ENCODE measurements at regions of chr2 and their contacts with region 1.

Region 1: GRCh38 chr2:84925724-84926376 is 20.4 kb downstream of the TMSB10 start:
- DNase-seq: peak; percentile 96 to 100 (median 98)
- ATAC-seq: peak; percentile 80
- H3K4me3 ChIP-seq: peak overlapping the region; percentile 74 to 80
- H3K4me3 Mint-ChIP-seq: peak overlapping the region; percentile 94
- H3K27ac ChIP-seq: peak overlapping the region; percentile 49 to 54
- H3K27ac Mint-ChIP-seq: peak overlapping the region; percentile 92
- H3K4me1 ChIP-seq: peaks cover 26% of the 10 kb centered on the region
- H3K4me1 Mint-ChIP-seq: peaks cover 41% of the 10 kb centered on the region
- H3K27me3 ChIP-seq: no peaks in the 10 kb centered on the region
- H3K27me3 Mint-ChIP-seq: no peaks in the 10 kb centered on the region
- CTCF ChIP-seq: peak; percentile 99

Region 2: DNA sequence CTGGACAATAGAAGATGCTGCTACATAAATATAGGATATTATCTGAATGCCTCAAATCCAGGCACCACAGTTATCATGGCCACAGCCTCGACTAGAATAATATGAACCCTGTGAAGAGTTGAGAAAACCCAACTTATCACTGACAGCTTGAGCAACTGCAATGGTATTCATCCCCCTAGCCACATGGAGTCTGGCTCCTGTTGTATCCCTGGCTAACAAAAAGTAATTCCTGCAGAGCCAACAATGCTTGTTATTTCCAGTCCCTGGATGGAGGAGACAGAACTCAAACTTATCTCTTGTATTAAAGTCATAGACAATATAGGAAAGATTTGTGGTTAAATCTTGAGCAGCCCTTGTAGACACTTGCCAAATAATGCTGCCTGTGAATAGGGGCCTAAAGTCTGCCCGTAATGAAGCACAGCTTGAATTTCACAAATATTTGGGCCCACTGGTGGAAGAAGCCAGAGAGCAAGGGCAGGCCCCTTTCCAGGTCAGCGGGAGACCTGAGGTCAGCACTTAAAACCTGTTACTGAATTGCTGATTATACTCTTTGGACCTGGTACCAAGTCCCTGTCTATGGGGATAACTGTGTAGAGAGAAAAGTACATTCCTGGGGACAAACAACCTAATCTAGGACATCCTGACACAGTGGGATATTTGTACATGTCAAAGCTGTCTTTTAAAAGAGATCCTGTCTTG is 438.4 kb before region 1 on chr2:
- CTCF ChIA-PET with region 1: interaction called, 36 read pairs
- POLR2A ChIA-PET with region 1: no interaction called
- intact Hi-C with region 1: no loop called
- DNase-seq: no peak
- ATAC-seq: no peak
- H3K4me3 ChIP-seq: no peak overlapping the region
- H3K4me3 Mint-ChIP-seq: no peak overlapping the region
- H3K27ac ChIP-seq: no peak overlapping the region
- H3K27ac Mint-ChIP-seq: no peak overlapping the region
- H3K4me1 ChIP-seq: peaks cover 2% of the 10 kb centered on the region
- H3K4me1 Mint-ChIP-seq: peaks cover 2% of the 10 kb centered on the region
- H3K27me3 ChIP-seq: no peaks in the 10 kb centered on the region
- H3K27me3 Mint-ChIP-seq: no peaks in the 10 kb centered on the region
- CTCF ChIP-seq: no peak

Region 3: GRCh38 chr2:84631047-84631446 is 294.8 kb before region 1 on chr2:
- CTCF ChIA-PET with region 1: interaction called, 15 read pairs
- POLR2A ChIA-PET with region 1: no interaction called
- intact Hi-C with region 1: loop called (anchors 2 to 5 kb)
- DNase-seq: peak in 2 of 9 experiments; percentile 40 to 57
- ATAC-seq: peak; percentile 51
- H3K4me3 ChIP-seq: no peak overlapping the region
- H3K4me3 Mint-ChIP-seq: no peak overlapping the region
- H3K27ac ChIP-seq: no peak overlapping the region
- H3K27ac Mint-ChIP-seq: no peak overlapping the region
- H3K4me1 ChIP-seq: peaks cover 22% of the 10 kb centered on the region
- H3K4me1 Mint-ChIP-seq: peaks cover 41% of the 10 kb centered on the region
- H3K27me3 ChIP-seq: no peaks in the 10 kb centered on the region
- H3K27me3 Mint-ChIP-seq: no peaks in the 10 kb centered on the region
- CTCF ChIP-seq: peak; percentile 51

Region 4: GRCh38 chr2:84840306-84840705 is 85.5 kb before region 1 on chr2:
- CTCF ChIA-PET with region 1: interaction called, 11 read pairs
- POLR2A ChIA-PET with region 1: no interaction called
- intact Hi-C with region 1: no loop called
- DNase-seq: no peak
- ATAC-seq: peak; percentile 19
- H3K4me3 ChIP-seq: peak overlapping the region in 1 of 2 experiments; percentile 31
- H3K4me3 Mint-ChIP-seq: peak overlapping the region; percentile 71
- H3K27ac ChIP-seq: peak overlapping the region; percentile 64 to 72
- H3K27ac Mint-ChIP-seq: peak overlapping the region; percentile 93
- H3K4me1 ChIP-seq: peaks cover 90% of the 10 kb centered on the region
- H3K4me1 Mint-ChIP-seq: peaks cover 88% of the 10 kb centered on the region
- H3K27me3 ChIP-seq: no peaks in the 10 kb centered on the region
- H3K27me3 Mint-ChIP-seq: no peaks in the 10 kb centered on the region
- CTCF ChIP-seq: no peak

Region 5: GRCh38 chr2:84870306-84870705 is 55.5 kb before region 1 on chr2:
- CTCF ChIA-PET with region 1: interaction called, 278 read pairs
- POLR2A ChIA-PET with region 1: interaction called, 13 read pairs
- intact Hi-C with region 1: loop called in 1 of 2 experiments (anchors 1 kb)
- DNase-seq: peak in 2 of 9 experiments; percentile 39 to 48
- ATAC-seq: no peak
- H3K4me3 ChIP-seq: no peak overlapping the region
- H3K4me3 Mint-ChIP-seq: peak overlapping the region; percentile 32
- H3K27ac ChIP-seq: no peak overlapping the region
- H3K27ac Mint-ChIP-seq: peak overlapping the region; percentile 82
- H3K4me1 ChIP-seq: peaks cover 82% of the 10 kb centered on the region
- H3K4me1 Mint-ChIP-seq: peaks cover 82% of the 10 kb centered on the region
- H3K27me3 ChIP-seq: no peaks in the 10 kb centered on the region
- H3K27me3 Mint-ChIP-seq: no peaks in the 10 kb centered on the region
- CTCF ChIP-seq: no peak

Region 6: DNA sequence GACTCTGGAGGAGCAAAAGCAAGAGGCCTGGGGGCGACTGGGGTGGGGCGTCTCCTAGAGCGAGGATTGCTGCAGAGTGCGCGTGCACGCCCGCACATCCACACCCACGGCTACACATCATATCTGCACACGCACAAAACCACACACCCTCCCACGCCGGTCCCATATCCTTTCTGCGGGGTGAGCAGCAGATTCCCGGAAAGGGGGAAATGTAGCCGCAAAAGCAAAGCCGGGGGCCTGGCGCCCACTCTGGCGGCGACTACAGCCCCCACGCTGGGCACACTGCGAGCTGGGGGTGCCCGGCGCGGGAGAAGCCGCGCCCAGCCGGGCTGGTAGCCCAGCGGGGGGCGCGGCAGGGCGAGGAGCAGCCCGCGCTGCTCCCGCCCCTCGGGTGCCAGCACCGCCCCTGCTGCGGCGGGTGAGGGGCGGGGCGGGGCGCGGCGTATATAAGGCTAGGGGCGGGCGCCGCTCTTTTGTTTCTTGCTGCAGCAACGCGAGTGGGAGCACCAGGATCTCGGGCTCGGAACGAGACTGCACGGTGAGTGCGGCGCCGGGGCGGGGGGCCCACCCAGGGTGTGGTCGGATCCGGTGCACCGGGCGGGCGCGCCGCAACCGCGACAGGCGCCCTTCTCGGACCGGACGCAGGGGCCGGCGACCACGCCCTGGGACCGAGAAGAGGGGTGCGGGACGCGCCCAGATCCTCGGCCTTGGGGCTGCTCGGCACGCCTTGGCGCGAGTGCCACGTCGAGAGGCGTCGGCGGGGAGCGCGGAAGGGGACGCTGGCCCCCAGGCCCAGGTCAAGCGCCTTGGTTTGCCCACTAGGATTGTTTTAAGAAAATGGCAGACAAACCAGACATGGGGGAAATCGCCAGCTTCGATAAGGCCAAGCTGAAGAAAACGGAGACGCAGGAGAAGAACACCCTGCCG is 20.4 kb before region 1 on chr2 and contains the start of gene TMSB10:
- CTCF ChIA-PET with region 1: interaction called, 98 read pairs
- POLR2A ChIA-PET with region 1: interaction called, 153 read pairs
- intact Hi-C with region 1: loop called (anchors 1 kb)
- DNase-seq: peak; percentile 84 to 97 (median 91)
- ATAC-seq: peak; percentile 80
- H3K4me3 ChIP-seq: peak within 1 kb of the TSS; percentile 85 to 91
- H3K4me3 Mint-ChIP-seq: peak within 1 kb of the TSS; percentile 92
- H3K27ac ChIP-seq: peak within 1 kb of the TSS; percentile 68 to 80
- H3K27ac Mint-ChIP-seq: peak within 1 kb of the TSS; percentile 90
- H3K4me1 ChIP-seq: peaks cover 39% of the 10 kb centered on the region
- H3K4me1 Mint-ChIP-seq: peaks cover 59% of the 10 kb centered on the region
- H3K27me3 ChIP-seq: no peaks in the 10 kb centered on the region
- H3K27me3 Mint-ChIP-seq: no peaks in the 10 kb centered on the region
- CTCF ChIP-seq: no peak
- total RNA-seq, gene TMSB10: 1,479 to 1,577 TPM

Region 7: DNA sequence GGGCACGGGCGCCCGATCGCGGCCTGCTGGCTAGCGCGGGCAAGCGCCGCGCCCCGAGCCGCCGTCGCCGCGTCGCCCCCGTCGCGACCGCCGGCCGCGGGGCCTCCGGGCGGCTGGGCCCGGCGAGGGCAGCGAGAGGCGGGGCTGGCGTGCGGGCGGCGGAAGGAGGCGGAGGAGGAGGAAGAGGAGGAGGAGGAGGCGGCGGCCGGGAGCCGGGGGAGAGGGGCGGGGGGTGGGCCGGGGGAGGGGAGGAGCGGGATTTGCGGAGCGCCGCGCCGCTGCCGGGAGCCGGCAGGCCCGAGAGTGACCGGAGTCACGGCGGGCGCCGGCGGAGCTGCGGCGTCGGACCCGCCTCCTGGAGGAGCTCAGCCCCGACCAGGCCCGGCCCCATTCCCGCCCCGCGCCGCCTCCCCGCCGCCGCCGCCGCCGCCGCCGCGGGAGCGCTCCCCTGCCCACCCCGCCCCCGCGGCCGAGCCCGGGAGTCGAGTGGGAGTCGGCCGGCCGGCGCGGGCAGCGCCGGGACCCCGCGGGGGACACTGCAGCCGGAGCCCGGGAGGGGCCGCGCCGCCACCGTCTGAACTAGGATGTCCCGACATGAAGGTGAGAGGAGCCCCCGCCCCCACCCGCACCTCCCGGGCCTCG is 45.1 kb after region 1 on chr2 and contains the start of gene KCMF1:
- CTCF ChIA-PET with region 1: interaction called, 15 read pairs
- POLR2A ChIA-PET with region 1: no interaction called
- intact Hi-C with region 1: loop called (anchors 1 to 5 kb)
- DNase-seq: peak; percentile 26 to 80 (median 69)
- ATAC-seq: peak; percentile 52
- H3K4me3 ChIP-seq: peak within 1 kb of the TSS; percentile 66 to 75
- H3K4me3 Mint-ChIP-seq: peak within 1 kb of the TSS; percentile 92
- H3K27ac ChIP-seq: peak within 1 kb of the TSS; percentile 74 to 78
- H3K27ac Mint-ChIP-seq: peak within 1 kb of the TSS; percentile 97
- H3K4me1 ChIP-seq: peaks cover 51% of the 10 kb centered on the region
- H3K4me1 Mint-ChIP-seq: peaks cover 61% of the 10 kb centered on the region
- H3K27me3 ChIP-seq: no peaks in the 10 kb centered on the region
- H3K27me3 Mint-ChIP-seq: no peaks in the 10 kb centered on the region
- CTCF ChIP-seq: no peak
- total RNA-seq, gene KCMF1: 85.3 to 89.5 TPM

Region 8: GRCh38 chr2:85089585-85089984 is 163.7 kb after region 1 on chr2:
- CTCF ChIA-PET with region 1: no interaction called
- POLR2A ChIA-PET with region 1: no interaction called
- intact Hi-C with region 1: no loop called
- DNase-seq: no peak
- ATAC-seq: no peak
- H3K4me3 ChIP-seq: no peak overlapping the region
- H3K4me3 Mint-ChIP-seq: no peak overlapping the region
- H3K27ac ChIP-seq: no peak overlapping the region
- H3K27ac Mint-ChIP-seq: no peak overlapping the region
- H3K4me1 ChIP-seq: no peaks in the 10 kb centered on the region
- H3K4me1 Mint-ChIP-seq: no peaks in the 10 kb centered on the region
- H3K27me3 ChIP-seq: no peaks in the 10 kb centered on the region
- H3K27me3 Mint-ChIP-seq: peaks cover 4% of the 10 kb centered on the region
- CTCF ChIP-seq: no peak